ENCODE measurements at regions of chr6 and their contacts with region 1.

Region 1: DNA sequence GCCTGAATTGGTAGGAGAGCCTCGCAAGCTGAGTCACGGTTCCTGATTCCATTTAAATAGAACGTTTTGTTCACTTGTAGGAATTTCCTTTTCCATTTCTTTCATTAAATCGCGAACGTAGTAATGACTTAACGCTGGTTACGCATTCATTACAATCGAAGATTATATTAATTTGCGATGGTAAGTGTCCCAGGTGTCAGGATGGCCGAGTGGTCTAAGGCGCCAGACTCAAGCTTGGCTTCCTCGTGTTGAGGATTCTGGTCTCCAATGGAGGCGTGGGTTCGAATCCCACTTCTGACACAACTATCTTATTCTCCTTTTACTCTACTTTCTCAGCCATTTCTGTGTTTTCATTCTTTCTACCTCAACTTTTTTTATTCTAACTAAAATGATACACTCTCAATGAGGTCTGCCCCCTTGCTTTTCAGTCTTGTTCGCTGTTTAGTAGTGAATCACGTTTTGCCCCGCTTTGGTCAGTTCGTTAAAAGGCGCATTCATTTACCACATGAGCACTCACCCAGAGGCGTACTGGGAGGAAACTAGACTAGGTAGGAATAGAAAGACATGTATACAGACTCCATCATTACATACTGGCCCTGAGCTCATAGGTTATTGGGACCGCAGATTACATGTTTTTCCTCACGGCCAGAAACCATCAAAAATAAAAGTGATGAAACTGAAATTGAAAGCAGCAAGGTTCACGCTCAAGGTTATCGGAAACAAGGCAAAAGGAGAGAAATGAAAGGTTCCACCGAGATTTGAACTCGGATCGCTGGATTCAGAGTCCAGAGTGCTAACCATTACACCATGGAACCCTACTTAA is 17.3 kb upstream of the TRIM27 start:
- DNase-seq: peak; percentile 62 to 94 (median 68)
- ATAC-seq: peak; percentile 82
- H3K4me3 ChIP-seq: peak overlapping the region; percentile 64
- H3K27ac ChIP-seq: peak overlapping the region; percentile 91
- H3K4me1 ChIP-seq: peaks cover 3 to 20% of the 10 kb centered on the region in 2 experiments; a peak in 3 of 5 replicates
- H3K27me3 ChIP-seq: no peaks in the 10 kb centered on the region
- CTCF ChIP-seq: no peak; a peak in 2 of 6 replicates
- EP300 ChIP-seq: peak; percentile 88
- POLR2A ChIP-seq: no peak
- RAD21 ChIP-seq: peak in 1 of 2 experiments; percentile 52; a peak in 2 of 4 replicates

Region 2: DNA sequence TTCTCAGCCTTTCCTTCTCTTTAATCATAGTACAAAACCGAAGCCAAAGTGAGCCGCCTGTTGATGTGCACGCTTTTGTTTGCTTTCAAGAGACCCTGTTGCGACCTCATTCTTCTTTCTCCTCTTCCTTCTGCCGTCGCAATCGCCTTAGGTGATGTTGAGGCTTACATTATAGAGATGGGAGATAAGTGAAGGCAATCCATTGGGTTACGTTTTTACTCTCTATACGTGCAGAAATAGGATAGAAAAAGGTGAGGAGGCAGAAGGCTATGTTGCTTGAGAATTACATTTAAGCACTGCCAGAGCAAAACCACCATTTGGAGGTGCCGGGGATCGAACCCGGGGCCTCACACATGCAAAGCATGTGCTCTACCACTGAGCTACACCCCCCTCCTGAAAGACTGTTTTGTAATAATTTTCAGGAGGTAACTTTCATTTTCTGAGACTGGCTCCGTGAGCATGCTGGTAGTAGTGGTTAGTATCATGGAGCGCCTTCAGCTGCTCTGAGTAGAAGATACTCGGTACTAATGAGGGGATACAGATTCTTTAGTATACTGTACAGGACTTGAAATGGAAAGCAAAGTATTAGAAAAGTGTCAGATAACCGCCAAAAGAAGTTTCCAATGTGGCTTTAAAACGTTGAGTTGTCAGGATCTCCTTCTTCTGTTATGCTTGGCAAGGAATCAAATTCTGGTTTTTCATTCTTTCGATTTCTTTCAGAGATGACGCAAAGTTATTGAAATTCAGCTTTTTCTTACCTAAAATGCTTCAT is 182.8 kb before region 1 on chr6:
- CTCF ChIA-PET with region 1: no interaction called
- POLR2A ChIA-PET with region 1: no interaction called
- in situ Hi-C with region 1: no loop called
- intact Hi-C with region 1: loop called (anchors 5 kb)
- DNase-seq: peak; percentile 70 to 96 (median 72)
- ATAC-seq: peak; percentile 73
- H3K4me3 ChIP-seq: peak overlapping the region; percentile 60
- H3K27ac ChIP-seq: peak overlapping the region; percentile 96
- H3K4me1 ChIP-seq: peaks cover 13 to 18% of the 10 kb centered on the region in 2 experiments; a peak in 4 of 5 replicates
- H3K27me3 ChIP-seq: no peaks in the 10 kb centered on the region
- CTCF ChIP-seq: no peak
- EP300 ChIP-seq: peak; percentile 87
- POLR2A ChIP-seq: 0 out of 2 replicates have a peak, but pooled peaks have one; percentile 61
- RAD21 ChIP-seq: peak in 1 of 2 experiments; percentile 32; a peak in 2 of 4 replicates

Region 3: GRCh38 chr6:28863604-28864320 is 77.3 kb before region 1 on chr6:
- CTCF ChIA-PET with region 1: interaction called, 5 read pairs
- POLR2A ChIA-PET with region 1: no interaction called
- in situ Hi-C with region 1: no loop called
- intact Hi-C with region 1: loop called (anchors 5 kb)
- DNase-seq: peak; percentile 64 to 92 (median 68)
- ATAC-seq: peak; percentile 72
- H3K4me3 ChIP-seq: peak overlapping the region; percentile 64
- H3K27ac ChIP-seq: peak overlapping the region; percentile 79
- H3K4me1 ChIP-seq: peaks cover 14 to 25% of the 10 kb centered on the region in 2 experiments; a peak in 4 of 5 replicates
- H3K27me3 ChIP-seq: no peaks in the 10 kb centered on the region
- CTCF ChIP-seq: 0 out of 6 replicates have a peak, but pooled peaks of 1 of the 3 experiments have one; percentile 61
- EP300 ChIP-seq: peak; percentile 76
- POLR2A ChIP-seq: peak; percentile 54; the same call in 1 of the 2 replicates
- RAD21 ChIP-seq: peak in 1 of 2 experiments; percentile 63; a peak in 3 of 4 replicates

Region 4: GRCh38 chr6:28895134-28895812 is 45.8 kb before region 1 on chr6:
- CTCF ChIA-PET with region 1: no interaction called
- POLR2A ChIA-PET with region 1: interaction called, 8 read pairs
- in situ Hi-C with region 1: no loop called
- intact Hi-C with region 1: loop called (anchors 1 kb)
- DNase-seq: peak; percentile 79 to 99 (median 88)
- ATAC-seq: peak; percentile 84
- H3K4me3 ChIP-seq: peak overlapping the region; percentile 49
- H3K27ac ChIP-seq: peak overlapping the region; percentile 98
- H3K4me1 ChIP-seq: peaks cover 14 to 15% of the 10 kb centered on the region in 2 experiments; a peak in 4 of 5 replicates
- H3K27me3 ChIP-seq: no peaks in the 10 kb centered on the region
- CTCF ChIP-seq: no peak
- EP300 ChIP-seq: no peak
- POLR2A ChIP-seq: peak; percentile 96
- RAD21 ChIP-seq: no peak

Region 5: GRCh38 chr6:28953039-28953584 is 12.0 kb after region 1 on chr6:
- CTCF ChIA-PET with region 1: interaction called, 3 read pairs
- POLR2A ChIA-PET with region 1: interaction called, 4 read pairs
- in situ Hi-C with region 1: no loop called
- intact Hi-C with region 1: loop called (anchors 1 kb)
- DNase-seq: peak; percentile 78 to 92 (median 84)
- ATAC-seq: peak; percentile 80
- H3K4me3 ChIP-seq: peak overlapping the region; percentile 43
- H3K27ac ChIP-seq: peak overlapping the region; percentile 76
- H3K4me1 ChIP-seq: peaks cover 22 to 33% of the 10 kb centered on the region in 2 experiments
- H3K27me3 ChIP-seq: no peaks in the 10 kb centered on the region
- CTCF ChIP-seq: no peak
- EP300 ChIP-seq: peak; percentile 82
- POLR2A ChIP-seq: no peak
- RAD21 ChIP-seq: no peak

Region 6: DNA sequence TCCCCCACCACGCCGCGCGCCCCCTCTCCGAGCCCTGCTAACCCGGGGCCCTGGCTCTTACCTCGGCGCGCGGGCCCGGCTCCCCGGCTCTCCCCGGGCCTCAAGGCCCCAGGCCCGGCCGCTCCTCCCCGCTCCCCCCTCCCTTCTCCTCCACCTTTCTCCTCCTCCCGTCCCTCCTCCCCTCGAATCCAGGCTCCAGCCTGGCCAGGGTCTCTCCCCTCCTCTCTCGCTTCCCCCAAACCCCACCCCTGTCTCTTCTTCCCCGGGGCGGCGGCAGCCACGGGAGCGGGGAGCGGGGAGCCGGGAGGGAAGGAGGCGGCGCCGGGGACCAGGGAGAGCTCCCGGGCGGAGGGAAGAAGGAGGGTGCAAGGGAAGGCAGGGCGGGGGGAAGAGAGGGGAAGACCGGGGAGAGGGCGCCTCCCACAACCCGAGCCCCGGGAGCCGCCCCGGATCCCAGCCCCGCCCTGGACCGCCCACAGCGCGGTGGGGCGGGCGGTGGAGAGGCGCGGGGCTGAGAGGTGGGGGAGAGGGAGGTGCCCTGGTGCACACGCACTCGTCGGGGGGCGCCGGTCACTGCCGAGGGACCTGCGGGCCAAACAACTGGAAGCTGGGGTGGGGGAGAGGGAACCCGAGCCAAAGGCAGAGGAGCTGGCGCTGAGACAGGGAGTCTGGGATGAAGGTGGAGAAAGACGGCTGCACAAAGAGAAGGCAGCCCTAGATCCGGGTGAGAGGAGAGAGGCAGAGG is 691.9 kb after region 1 on chr6 and contains the start of gene GABBR1:
- CTCF ChIA-PET with region 1: no interaction called
- POLR2A ChIA-PET with region 1: no interaction called
- in situ Hi-C with region 1: no loop called
- intact Hi-C with region 1: loop called (anchors 5 kb)
- DNase-seq: peak; percentile 94 to 99 (median 98)
- ATAC-seq: peak; percentile 87
- H3K4me3 ChIP-seq: peak within 1 kb of the TSS; percentile 84
- H3K27ac ChIP-seq: peak within 1 kb of the TSS; percentile 77
- H3K4me1 ChIP-seq: peaks cover 32 to 44% of the 10 kb centered on the region in 2 experiments; a peak in 4 of 5 replicates
- H3K27me3 ChIP-seq: no peaks in the 10 kb centered on the region
- CTCF ChIP-seq: no peak
- EP300 ChIP-seq: no peak
- POLR2A ChIP-seq: peak; percentile 60
- RAD21 ChIP-seq: no peak
- polyA plus RNA-seq, gene GABBR1: 2.2 to 2.4 TPM